Activated B cell treated with CpG ODN at 0.5 μM for 24 hours (primary cell): ENCODE measurements at regions of chr10 and their contacts with region 1.

Region 1: GRCh38 chr10:17228091-17228940 is at the start of gene VIM:
- DNase-seq: peak; percentile 82
- ATAC-seq: peak; percentile 45
- H3K4me3 Mint-ChIP-seq: peak within 1 kb of the TSS; percentile 97
- H3K27ac Mint-ChIP-seq: peak within 1 kb of the TSS; percentile 99
- H3K4me1 Mint-ChIP-seq: peaks cover 46% of the 10 kb centered on the region
- H3K27me3 Mint-ChIP-seq: no peaks in the 10 kb centered on the region
- CTCF ChIP-seq: no peak
- total RNA-seq, gene VIM: 796 and 798 TPM in 2 replicates

Region 2: GRCh38 chr10:16436758-16437539 is 791.4 kb before region 1 on chr10 and contains the start of gene PTER:
- CTCF ChIA-PET with region 1: no interaction called
- POLR2A ChIA-PET with region 1: interaction called, 3 read pairs
- intact Hi-C with region 1: loop called (anchors 1 kb)
- DNase-seq: peak; percentile 97
- ATAC-seq: peak; percentile 99
- H3K4me3 Mint-ChIP-seq: peak within 1 kb of the TSS; percentile 95
- H3K27ac Mint-ChIP-seq: peak within 1 kb of the TSS; percentile 88
- H3K4me1 Mint-ChIP-seq: peaks cover 48% of the 10 kb centered on the region
- H3K27me3 Mint-ChIP-seq: peaks cover 3% of the 10 kb centered on the region
- CTCF ChIP-seq: no peak
- total RNA-seq, gene PTER: 14.9 and 15.0 TPM in 2 replicates

Region 3: DNA sequence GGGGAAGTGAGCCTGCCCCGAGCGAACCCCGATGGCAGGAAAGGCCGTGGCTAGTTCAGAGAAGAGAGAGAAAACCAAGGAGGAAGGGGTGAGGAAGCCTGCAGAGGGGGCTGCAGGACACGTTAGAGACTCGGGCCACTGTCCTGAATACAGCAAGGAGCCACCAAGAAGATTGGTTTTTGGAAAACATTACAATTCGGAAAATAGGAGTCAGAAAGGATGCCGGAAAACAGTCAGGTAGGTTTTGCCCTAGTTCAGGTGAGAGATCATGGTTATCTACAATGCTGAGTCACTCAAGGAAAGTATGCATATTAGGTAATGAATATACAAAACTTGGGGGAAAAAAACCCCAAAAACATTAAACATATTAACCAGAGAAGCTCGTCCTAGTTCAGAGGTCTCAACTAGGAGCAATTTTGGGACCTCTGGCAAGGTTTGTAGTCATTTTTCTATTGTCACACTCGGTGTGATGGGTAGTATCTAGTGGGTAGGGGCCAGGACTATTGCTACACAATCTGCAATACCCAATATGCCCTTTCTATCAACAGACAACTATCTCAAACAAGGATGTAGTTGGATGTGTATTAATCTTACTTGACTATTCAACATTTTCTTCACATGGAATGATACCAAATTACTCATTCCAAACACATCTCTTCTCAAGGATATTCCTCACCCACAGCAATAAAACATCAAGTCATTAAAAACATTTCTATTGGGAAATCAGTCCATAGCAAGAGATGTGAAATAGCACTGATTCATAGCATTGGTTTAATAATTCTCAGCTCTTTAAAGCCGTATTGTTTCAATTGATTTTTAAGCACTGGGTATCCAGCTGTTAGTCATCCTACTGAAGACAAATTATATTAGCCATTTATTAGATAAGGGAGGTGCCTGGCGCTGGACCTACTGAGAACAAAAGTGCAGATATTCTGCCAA is 336.7 kb before region 1 on chr10:
- CTCF ChIA-PET with region 1: interaction called, 3 read pairs
- POLR2A ChIA-PET with region 1: interaction called, 32 read pairs
- intact Hi-C with region 1: loop called (anchors 1 kb)
- DNase-seq: no peak
- ATAC-seq: peak; percentile 84
- H3K4me3 Mint-ChIP-seq: peak overlapping the region; percentile 77
- H3K27ac Mint-ChIP-seq: peak overlapping the region; percentile 10
- H3K4me1 Mint-ChIP-seq: peaks cover 10% of the 10 kb centered on the region
- H3K27me3 Mint-ChIP-seq: peaks cover 3% of the 10 kb centered on the region
- CTCF ChIP-seq: no peak

Region 4: DNA sequence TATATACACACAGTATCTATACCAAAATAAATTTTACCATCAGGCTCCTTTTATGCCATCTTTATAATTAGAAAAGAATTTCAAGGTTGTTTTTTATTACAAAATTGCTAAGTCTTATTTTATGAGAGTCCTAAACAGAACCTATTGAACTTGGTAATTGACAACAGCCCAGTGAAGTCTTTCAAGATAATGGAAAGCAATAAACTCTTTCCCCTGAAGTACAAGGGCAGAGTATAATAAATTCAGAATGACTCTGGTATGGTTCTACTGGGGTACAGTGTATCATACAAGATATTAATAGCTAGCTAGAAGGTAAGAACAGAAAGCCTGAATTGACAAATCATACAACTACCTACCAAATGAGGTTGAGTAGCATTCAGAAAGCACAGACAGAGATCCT is 72.5 kb before region 1 on chr10:
- CTCF ChIA-PET with region 1: no interaction called
- POLR2A ChIA-PET with region 1: interaction called, 3 read pairs
- intact Hi-C with region 1: loop called (anchors 5 kb)
- DNase-seq: no peak
- ATAC-seq: no peak
- H3K4me3 Mint-ChIP-seq: no peak overlapping the region
- H3K27ac Mint-ChIP-seq: no peak overlapping the region
- H3K4me1 Mint-ChIP-seq: no peaks in the 10 kb centered on the region
- H3K27me3 Mint-ChIP-seq: no peaks in the 10 kb centered on the region
- CTCF ChIP-seq: no peak

Region 5: DNA sequence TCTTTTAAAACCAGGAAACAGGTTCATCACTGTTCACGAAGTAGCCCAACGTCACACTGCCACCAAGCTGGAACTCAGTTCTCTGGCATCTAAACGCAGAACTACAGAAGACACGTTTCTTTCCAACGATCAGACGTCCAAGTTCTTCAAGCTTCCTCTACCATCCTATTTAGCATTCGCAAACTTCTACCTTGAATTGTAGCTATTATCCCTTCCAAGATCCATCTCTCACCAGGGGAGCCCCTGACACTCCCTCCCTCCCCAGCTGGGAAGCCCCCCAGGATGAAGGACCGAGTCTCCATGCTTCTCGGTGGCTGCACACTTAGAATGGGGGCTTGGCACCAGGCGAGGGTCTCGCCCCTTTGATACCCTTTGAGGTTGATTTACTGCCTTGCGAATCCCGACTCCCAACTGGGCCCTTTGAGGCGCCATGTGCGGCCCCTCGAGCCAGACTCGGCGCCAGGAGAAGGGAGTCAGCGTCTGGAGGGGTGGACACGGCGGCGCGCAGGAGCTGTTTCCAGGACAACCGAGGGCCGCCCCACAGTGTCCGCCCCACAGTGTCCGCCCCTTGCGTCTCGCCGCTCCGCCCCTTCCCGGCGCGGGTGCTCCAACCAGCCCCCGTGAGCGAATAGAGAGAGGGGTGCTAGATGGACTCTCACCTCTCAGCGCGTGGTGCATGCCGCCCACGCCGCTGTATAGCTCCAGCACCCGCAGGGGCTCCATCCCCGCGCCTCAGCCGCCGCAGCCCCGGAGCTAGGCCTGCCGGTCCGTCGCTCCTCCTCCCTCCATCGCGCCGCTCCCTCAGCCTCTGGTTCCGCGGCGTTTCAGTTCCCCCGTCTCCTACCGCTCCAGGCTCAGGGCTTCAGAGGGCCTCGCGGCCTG is 27.2 kb before region 1 on chr10 and contains the start of gene TRDMT1:
- CTCF ChIA-PET with region 1: interaction called, 35 read pairs
- POLR2A ChIA-PET with region 1: interaction called, 251 read pairs
- intact Hi-C with region 1: loop called (anchors 1 kb)
- DNase-seq: peak; percentile 81
- ATAC-seq: peak; percentile 86
- H3K4me3 Mint-ChIP-seq: peak within 1 kb of the TSS; percentile 98
- H3K27ac Mint-ChIP-seq: peak within 1 kb of the TSS; percentile 94
- H3K4me1 Mint-ChIP-seq: peaks cover 42% of the 10 kb centered on the region
- H3K27me3 Mint-ChIP-seq: no peaks in the 10 kb centered on the region
- CTCF ChIP-seq: no peak
- total RNA-seq, gene TRDMT1: 15.0 and 19.9 TPM in 2 replicates

Region 6: DNA sequence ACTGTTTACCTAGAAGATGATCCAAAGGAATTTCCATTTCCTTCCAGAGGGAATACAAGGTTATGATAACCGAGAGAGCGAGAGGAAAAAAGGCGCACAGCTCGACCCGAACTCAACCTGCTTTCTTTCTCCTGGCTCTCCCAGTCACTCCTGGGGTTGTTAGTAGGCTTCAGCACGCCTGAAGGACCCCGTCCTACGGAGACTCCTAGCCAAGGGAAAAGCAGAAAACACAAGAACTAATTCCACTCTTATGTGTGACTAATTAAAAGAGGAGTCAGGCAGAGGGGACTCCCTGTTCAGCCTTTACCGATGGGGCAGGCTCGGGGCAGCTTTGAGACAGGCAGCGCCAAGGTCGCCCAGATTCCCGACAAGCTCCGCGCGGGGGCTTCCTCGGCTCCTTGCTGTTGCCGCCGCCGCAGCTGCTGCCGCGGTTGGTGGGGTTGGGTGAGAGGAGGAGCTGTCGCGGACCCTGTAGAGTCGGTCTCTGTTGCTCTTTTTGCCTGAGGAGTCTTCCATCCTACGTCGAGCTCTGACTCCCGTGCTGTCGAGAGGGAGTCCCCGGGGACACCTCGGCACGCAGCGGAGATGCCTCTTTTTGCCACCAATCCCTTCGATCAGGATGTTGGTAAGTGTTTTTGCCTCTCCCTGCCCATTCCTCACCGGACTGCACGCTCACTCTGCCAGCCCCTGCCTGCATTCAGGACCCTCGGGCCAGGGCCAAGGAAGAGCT is 415.6 kb after region 1 on chr10 and contains the start of gene STAM:
- CTCF ChIA-PET with region 1: no interaction called
- POLR2A ChIA-PET with region 1: interaction called, 3 read pairs
- intact Hi-C with region 1: loop called (anchors 1 kb)
- DNase-seq: peak; percentile 86
- ATAC-seq: peak; percentile 91
- H3K4me3 Mint-ChIP-seq: peak within 1 kb of the TSS; percentile 99
- H3K27ac Mint-ChIP-seq: peak within 1 kb of the TSS; percentile 100
- H3K4me1 Mint-ChIP-seq: peaks cover 54% of the 10 kb centered on the region
- H3K27me3 Mint-ChIP-seq: no peaks in the 10 kb centered on the region
- CTCF ChIP-seq: no peak
- total RNA-seq, gene STAM: 25.5 and 28.7 TPM in 2 replicates